Activated naive CD4-positive, alpha-beta T cell treated with anti-CD3 and anti-CD28 coated beads for 36 hours (primary cell): ENCODE measurements at regions of chr7 and their contacts with region 1.

Region 1: DNA sequence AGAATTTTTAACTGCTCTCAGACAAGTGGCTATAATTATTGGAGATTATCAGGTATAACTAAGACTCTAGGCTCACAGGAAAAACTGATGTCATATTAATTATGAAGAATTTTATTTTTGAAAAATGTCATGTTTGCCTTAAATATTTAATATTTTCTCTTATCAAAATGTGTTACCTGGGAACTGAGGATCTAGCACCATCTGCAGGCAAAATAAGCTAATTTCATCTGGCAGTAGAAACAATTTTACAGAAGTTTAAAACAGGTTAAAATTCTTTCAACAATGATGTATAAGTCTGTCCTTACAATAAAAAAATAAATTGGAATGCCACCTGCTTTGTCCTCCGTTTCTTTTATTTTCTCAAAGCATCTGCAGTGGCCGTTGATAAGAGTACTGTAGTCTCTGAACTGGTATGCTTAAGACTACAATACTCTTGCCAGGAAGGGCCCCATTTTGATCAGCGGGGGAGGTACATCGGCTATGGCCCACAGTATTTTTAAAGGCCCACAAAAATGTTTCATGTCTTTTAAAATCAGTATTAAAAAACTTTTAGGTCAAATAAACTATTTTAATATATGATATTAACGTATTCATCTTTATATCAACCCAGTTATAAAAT is 81.3 kb downstream of the VWDE start:
- DNase-seq: peak; percentile 31
- H3K4me3 Mint-ChIP-seq: no peak overlapping the region
- H3K27ac Mint-ChIP-seq: no peak overlapping the region
- H3K4me1 Mint-ChIP-seq: peaks cover 2% of the 10 kb centered on the region
- H3K27me3 Mint-ChIP-seq: no peaks in the 10 kb centered on the region

Region 2: DNA sequence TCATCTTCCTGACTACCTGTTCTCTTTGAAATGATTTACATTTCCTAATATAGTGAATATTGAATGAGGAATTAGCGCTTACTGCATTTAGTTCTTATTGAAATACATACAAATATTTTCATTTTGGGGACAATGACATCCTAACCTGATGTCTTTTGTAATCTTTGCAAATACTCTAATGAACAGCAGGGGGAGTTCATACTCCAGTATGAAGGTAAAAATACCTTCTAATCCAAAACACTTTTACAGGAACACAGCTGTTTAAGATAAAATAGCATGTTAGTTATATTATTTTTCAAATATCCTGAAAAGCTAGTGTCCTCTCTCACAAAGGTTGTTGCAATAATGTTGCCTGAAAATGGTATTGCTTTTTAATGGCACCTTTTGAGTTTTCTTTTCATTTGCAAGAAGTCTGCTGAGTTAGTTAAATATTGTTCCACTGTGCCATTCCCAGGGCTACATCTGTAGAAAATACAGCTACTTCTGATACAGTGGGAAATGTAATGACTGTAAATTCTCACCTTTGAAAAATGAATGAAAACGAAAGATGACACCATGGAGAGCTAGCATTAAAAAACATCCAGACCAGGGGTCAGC is 948.7 kb before region 1 on chr7:
- CTCF ChIA-PET with region 1: no interaction called
- intact Hi-C with region 1: loop called (anchors 2 kb)
- DNase-seq: no peak
- H3K4me3 Mint-ChIP-seq: no peak overlapping the region
- H3K27ac Mint-ChIP-seq: no peak overlapping the region
- H3K4me1 Mint-ChIP-seq: no peaks in the 10 kb centered on the region
- H3K27me3 Mint-ChIP-seq: no peaks in the 10 kb centered on the region

Region 3: GRCh38 chr7:11427686-11428273 is 894.6 kb before region 1 on chr7:
- CTCF ChIA-PET with region 1: no interaction called
- intact Hi-C with region 1: loop called (anchors 1 kb)
- DNase-seq: peak; percentile 6
- H3K4me3 Mint-ChIP-seq: no peak overlapping the region
- H3K27ac Mint-ChIP-seq: no peak overlapping the region
- H3K4me1 Mint-ChIP-seq: no peaks in the 10 kb centered on the region
- H3K27me3 Mint-ChIP-seq: no peaks in the 10 kb centered on the region

Region 4: DNA sequence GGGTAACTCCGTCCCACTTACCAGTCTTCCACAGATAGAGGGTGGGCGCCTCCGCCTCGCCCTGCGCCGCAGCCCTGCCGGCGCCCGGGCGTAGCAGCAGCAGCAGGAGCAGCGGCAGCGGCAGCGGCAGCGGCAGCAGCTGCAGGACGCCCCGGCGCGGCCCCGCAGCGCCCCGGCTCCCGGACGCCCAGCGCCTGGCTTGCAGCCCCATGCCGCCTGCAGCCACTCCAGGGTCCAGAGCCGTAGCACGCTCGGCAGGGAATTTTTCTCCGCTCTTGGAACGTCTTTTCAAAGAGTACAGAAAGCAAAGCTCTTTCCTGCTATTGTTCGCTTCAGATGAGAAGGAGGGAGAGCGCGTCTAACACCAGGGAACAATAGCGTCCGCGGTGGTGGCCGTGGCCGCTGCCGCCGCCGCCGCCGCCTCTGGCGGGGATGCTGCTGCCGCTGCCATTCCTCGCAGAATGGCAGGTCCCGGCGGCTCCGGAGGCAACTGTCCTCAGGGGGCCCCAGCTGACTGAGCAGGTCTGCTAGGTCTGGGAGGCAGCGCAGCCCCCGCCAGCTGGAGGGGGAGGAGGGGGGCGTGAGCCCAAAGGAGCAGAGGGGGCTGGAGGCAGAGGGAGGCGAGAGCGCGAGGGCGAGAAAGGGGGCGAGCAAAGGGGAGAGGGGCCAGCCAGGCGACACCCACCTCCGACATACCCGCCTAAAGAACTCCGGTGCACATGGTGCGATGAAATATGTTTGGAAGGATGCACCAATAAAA is 490.5 kb before region 1 on chr7 and contains the start of gene THSD7A:
- CTCF ChIA-PET with region 1: interaction called, 3 read pairs
- intact Hi-C with region 1: loop called (anchors 1 kb)
- DNase-seq: no peak
- H3K4me3 Mint-ChIP-seq: peak within 1 kb of the TSS; percentile 32
- H3K27ac Mint-ChIP-seq: no peak within 1 kb of the TSS
- H3K4me1 Mint-ChIP-seq: peaks cover 12% of the 10 kb centered on the region
- H3K27me3 Mint-ChIP-seq: peaks cover 47% of the 10 kb centered on the region
- total RNA-seq, gene THSD7A: not detected

Region 5: GRCh38 chr7:12111422-12112405 is 210.7 kb before region 1 on chr7:
- CTCF ChIA-PET with region 1: interaction called, 4 read pairs
- intact Hi-C with region 1: loop called (anchors 1 kb)
- DNase-seq: peak; percentile 29
- H3K4me3 Mint-ChIP-seq: peak overlapping the region; percentile 65
- H3K27ac Mint-ChIP-seq: no peak overlapping the region
- H3K4me1 Mint-ChIP-seq: peaks cover 10% of the 10 kb centered on the region
- H3K27me3 Mint-ChIP-seq: peaks cover 22% of the 10 kb centered on the region